ENCODE measurements at regions of chr9 and their contacts with region 1.

Region 1: DNA sequence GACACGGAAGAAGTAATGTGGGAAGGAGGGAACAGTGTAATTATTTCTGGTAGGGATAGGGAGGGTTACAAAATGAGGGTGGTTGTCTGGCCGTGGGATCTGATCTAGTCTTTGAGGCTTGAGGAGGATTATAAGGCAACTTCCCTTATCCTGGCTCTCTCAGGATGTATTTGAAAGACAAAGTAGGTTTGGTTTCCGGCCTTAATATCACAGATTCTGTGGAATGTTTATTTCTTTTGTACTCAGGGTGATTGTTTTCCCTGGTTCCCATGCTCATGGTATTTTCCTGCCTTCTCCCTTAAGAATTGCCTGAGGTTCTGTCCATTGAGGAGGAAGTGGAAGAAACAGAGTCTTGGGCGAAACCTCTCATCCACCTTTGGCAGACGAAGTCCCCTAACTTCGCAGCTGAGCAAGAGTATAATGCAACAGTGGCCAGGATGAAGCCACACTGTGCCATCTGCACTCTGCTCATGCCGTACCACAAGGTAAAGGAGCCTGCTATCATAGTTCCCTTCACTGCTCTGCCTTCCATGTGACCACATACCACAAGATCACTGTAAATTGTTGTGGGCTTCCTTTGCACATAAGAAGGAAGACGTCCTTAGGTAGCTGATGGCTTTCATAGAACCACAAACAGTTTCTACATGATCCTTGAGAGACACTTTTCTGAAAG is 253.8 kb downstream of the KDM4C start:
- DNase-seq: peak in 2 of 9 experiments; percentile 12 to 40
- ATAC-seq: peak; percentile 65
- H3K4me3 ChIP-seq: no peak overlapping the region
- H3K4me3 Mint-ChIP-seq: no peak overlapping the region
- H3K27ac ChIP-seq: no peak overlapping the region
- H3K27ac Mint-ChIP-seq: peak overlapping the region; percentile 33
- H3K4me1 ChIP-seq: peaks cover 7% of the 10 kb centered on the region
- H3K4me1 Mint-ChIP-seq: peaks cover 15% of the 10 kb centered on the region
- H3K27me3 ChIP-seq: no peaks in the 10 kb centered on the region
- H3K27me3 Mint-ChIP-seq: no peaks in the 10 kb centered on the region
- CTCF ChIP-seq: no peak

Region 2: DNA sequence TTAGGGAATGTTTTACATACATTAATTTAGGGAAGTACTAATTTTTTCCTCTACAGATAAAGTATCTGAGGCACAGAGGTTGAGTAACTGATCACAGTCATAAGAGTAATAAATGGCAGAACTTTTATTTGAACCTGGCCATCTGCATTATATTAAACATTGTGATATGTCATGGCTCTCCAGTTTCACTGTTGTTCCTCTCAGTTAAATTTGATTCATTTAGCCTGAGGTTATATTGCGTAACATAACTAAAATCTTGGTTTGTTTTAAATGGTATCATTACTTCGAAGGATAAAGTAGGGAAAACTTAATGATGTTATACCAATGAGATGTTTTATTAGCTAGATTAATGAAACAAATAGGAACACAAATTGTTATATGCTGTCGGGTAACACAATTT is 30.6 kb after region 1 on chr9:
- CTCF ChIA-PET with region 1: no interaction called
- POLR2A ChIA-PET with region 1: no interaction called
- intact Hi-C with region 1: loop called in 1 of 2 experiments (anchors 5 kb)
- DNase-seq: no peak
- ATAC-seq: no peak
- H3K4me3 ChIP-seq: no peak overlapping the region
- H3K4me3 Mint-ChIP-seq: no peak overlapping the region
- H3K27ac ChIP-seq: no peak overlapping the region
- H3K27ac Mint-ChIP-seq: no peak overlapping the region
- H3K4me1 ChIP-seq: no peaks in the 10 kb centered on the region
- H3K4me1 Mint-ChIP-seq: no peaks in the 10 kb centered on the region
- H3K27me3 ChIP-seq: no peaks in the 10 kb centered on the region
- H3K27me3 Mint-ChIP-seq: no peaks in the 10 kb centered on the region
- CTCF ChIP-seq: no peak

Measured in CD8-positive, alpha-beta T cell (primary cell).